Breast epithelium (tissue), 4 donors: ENCODE measurements at regions of chr6 and their contacts with region 1.

Region 1: DNA sequence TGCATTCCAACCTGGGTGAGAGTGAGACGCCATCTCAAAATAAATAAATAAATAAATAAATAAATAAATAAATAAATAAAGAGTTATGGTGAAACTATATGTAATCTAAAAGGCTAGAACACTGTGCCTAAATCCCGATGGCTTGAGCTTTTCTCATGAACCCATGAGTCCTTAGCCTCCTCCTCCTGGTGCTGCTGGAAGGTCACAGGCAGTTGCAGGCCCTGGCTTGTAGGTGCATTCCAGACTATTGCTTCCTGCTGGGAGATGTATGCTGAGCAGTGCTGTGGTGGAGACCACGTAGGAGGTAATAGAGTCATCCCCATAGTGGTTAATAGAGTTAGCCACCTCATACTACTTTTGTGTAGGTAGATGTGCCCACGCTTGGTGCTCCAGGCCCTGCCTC is 12.5 kb downstream of the PTK7 start:
- DNase-seq: peak in 1 of 2 donors; percentile 70
- H3K4me3 ChIP-seq: no peak overlapping the region
- H3K27ac ChIP-seq: peak overlapping the region; percentile 92 to 93
- H3K4me1 ChIP-seq: peaks cover 13 to 17% of the 10 kb centered on the region in 2 donors
- H3K27me3 ChIP-seq: no peaks in the 10 kb centered on the region
- CTCF ChIP-seq: no peak
- POLR2A ChIP-seq: no peak

Region 2: DNA sequence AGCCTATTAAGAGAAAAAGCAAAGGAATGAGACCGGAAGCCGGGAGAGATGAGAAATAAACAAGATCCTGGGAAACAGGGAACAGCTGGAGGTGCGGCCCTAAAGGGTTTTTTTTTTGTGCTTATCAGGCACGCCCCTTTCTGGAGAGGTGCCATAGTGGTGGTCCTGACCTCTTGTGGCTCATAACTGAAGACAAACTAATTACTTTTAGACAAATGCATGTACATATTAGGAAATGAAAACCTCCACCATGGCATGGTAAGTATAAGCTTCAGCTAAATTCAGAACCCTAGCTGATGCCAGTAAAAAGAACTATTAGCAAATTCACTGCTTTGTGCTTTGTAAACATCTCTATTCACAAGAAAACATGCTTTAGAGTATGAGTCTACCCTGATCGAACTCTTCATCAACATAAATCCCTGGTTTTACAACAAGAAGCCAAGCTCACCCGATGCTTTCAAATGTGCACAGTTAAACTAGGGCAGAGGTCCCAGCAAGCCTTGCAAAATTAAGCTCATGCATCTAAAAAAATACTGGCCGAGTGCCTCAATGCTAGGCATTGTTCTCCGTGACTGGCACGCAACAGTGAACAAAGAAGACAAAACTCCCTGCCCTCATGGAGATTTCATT is 774.6 kb before region 1 on chr6:
- intact Hi-C with region 1: no loop called
- DNase-seq: no peak
- H3K4me3 ChIP-seq: no peak overlapping the region
- H3K27ac ChIP-seq: peak overlapping the region; percentile 40 to 74
- H3K4me1 ChIP-seq: no peaks in the 10 kb centered on the region
- H3K27me3 ChIP-seq: no peaks in the 10 kb centered on the region
- CTCF ChIP-seq: no peak
- POLR2A ChIP-seq: no peak

Region 3: GRCh38 chr6:43107344-43108062 is 18.8 kb after region 1 on chr6:
- intact Hi-C with region 1: loop called (anchors 1 kb)
- DNase-seq: no peak
- H3K4me3 ChIP-seq: no peak overlapping the region
- H3K27ac ChIP-seq: no peak overlapping the region
- H3K4me1 ChIP-seq: no peaks in the 10 kb centered on the region
- H3K27me3 ChIP-seq: no peaks in the 10 kb centered on the region
- CTCF ChIP-seq: no peak
- POLR2A ChIP-seq: no peak